ENCODE measurements at regions of chr9 and their contacts with region 1.

Region 1: DNA sequence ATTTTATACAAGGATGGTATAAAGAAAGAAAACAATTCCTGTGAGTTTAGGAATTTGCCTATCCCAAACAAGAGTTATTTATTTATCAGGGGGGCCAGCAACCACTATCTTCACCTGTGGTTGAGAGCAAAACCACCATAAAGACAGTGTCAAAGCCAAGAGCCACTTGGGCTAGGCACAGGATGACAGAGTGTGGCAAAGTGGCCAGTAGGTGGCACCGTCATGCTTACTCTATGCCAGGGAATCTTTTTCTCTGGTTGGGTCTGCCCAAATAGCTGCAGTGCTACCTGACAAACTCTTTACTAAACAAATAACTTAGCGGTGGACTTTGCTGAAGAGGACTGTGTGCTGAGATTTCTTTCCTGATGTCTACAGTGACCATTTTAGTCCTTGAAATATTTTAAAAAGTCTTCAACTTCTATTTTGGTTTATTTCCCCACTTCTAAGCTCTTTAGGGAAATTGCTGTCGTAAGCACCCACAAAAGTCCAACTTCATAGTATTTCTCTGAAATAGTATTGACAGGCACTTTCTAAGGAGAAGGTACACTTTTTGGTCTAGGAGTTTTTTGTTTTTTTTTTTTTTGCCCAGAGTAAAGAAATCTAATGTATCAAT is 285.0 kb downstream of the RFX3 start:
- DNase-seq: peak; percentile 78
- H3K4me3 Mint-ChIP-seq: no peak overlapping the region
- H3K27ac Mint-ChIP-seq: no peak overlapping the region
- H3K4me1 Mint-ChIP-seq: peaks cover 5% of the 10 kb centered on the region
- H3K27me3 Mint-ChIP-seq: no peaks in the 10 kb centered on the region

Region 2: GRCh38 chr9:2939368-2939767 is 301.4 kb before region 1 on chr9:
- CTCF ChIA-PET with region 1: no interaction called
- POLR2A ChIA-PET with region 1: no interaction called
- intact Hi-C with region 1: no loop called
- DNase-seq: no peak
- H3K4me3 Mint-ChIP-seq: no peak overlapping the region
- H3K27ac Mint-ChIP-seq: no peak overlapping the region
- H3K4me1 Mint-ChIP-seq: no peaks in the 10 kb centered on the region
- H3K27me3 Mint-ChIP-seq: peaks cover 9% of the 10 kb centered on the region

Region 3: DNA sequence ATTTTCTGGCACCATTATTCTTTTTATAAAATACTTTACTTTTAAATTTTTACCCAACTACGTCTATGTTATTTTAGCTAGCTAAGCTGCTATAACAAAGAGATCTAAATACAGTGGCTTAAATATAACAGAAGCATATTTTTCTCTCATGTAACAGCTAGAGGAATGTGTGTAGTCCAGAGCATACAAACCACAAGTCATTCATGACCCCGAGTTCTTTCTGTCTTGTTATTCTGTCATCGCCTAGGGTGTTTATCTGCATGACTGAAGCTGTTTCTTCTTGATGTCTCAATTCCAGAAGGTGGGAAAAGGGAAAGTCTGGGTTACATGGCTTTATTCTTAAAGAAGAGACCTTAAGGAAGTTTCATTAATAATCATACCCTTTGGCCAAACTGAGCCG is 421.9 kb after region 1 on chr9:
- CTCF ChIA-PET with region 1: no interaction called
- POLR2A ChIA-PET with region 1: no interaction called
- intact Hi-C with region 1: loop called (anchors 10 kb)
- DNase-seq: no peak
- H3K4me3 Mint-ChIP-seq: no peak overlapping the region
- H3K27ac Mint-ChIP-seq: no peak overlapping the region
- H3K4me1 Mint-ChIP-seq: no peaks in the 10 kb centered on the region
- H3K27me3 Mint-ChIP-seq: no peaks in the 10 kb centered on the region

Region 4: DNA sequence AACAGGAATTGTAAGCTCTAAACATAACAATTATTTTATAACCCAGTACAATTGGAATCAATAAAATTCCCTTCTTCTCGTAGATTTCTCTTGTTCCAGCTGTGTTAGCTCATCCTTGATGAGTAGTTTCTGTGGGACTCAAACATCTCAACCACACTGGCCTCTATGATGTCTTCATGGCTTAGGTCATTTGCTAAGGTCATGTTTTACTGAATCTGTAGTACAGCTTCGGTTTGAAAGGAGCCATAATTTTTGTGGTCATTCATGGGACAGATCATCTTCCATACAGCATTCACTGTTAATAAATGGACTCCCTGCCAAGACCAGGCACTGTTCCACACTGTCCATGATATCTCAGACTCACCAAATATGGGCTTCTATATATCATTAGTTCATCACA is 654.0 kb after region 1 on chr9:
- CTCF ChIA-PET with region 1: no interaction called
- POLR2A ChIA-PET with region 1: no interaction called
- intact Hi-C with region 1: no loop called
- DNase-seq: no peak
- H3K4me3 Mint-ChIP-seq: no peak overlapping the region
- H3K27ac Mint-ChIP-seq: no peak overlapping the region
- H3K4me1 Mint-ChIP-seq: no peaks in the 10 kb centered on the region
- H3K27me3 Mint-ChIP-seq: no peaks in the 10 kb centered on the region

Measured in activated CD4-positive, alpha-beta memory T cell treated with anti-CD3 and anti-CD28 coated beads for 36 hours (primary cell).